Activated CD4-positive, alpha-beta memory T cell treated with anti-CD3 and anti-CD28 coated beads for 36 hours (primary cell): ENCODE measurements at regions of chr3 and their contacts with region 1.

Region 1: GRCh38 chr3:121883507-121883906 is 10.7 kb upstream of the SLC15A2 start:
- DNase-seq: no peak
- H3K4me3 Mint-ChIP-seq: no peak overlapping the region
- H3K27ac Mint-ChIP-seq: no peak overlapping the region
- H3K4me1 Mint-ChIP-seq: peaks cover 2% of the 10 kb centered on the region
- H3K27me3 Mint-ChIP-seq: no peaks in the 10 kb centered on the region

Region 2: DNA sequence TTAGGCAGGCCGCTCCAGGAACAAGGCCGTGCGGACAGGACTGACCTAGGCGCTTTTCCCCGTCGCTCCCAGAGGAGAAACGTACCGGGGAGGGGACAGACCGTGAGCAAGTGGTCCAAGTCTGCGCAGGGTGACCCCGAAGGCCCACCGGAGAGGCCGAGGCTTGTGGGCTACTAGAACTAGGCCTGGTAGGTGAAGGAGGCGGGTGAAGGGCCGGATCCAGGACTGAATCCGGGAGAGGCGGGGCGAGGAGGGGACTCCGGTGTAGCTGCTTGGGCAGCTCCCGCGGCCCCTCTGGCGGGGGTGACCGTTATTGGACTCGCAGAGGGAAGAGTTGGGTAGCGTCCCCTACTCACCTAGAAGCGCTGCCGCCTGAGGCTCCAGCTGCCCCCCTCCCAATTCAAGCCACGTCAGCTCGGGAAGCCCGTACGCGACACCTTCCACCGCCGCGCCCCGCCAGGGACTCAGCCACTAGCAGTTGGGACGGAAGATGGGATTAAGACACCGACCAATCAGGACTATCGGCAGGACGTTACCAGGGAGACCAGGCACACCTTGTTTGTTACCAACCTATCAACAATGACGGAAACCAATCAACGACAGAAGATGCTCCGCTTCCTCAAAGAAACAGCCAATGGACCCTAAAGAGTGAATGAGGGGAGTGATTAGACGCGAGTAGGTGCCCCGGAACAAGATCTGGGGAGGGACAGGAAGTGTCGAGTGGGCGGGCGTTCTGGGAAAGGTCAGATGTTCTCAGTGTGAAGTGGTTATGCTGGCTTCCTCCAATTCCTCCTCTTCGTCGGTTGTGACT is 134.0 kb before region 1 on chr3 and contains the start of gene GOLGB1:
- CTCF ChIA-PET with region 1: no interaction called
- POLR2A ChIA-PET with region 1: no interaction called
- intact Hi-C with region 1: no loop called
- DNase-seq: peak; percentile 97
- H3K4me3 Mint-ChIP-seq: no peak within 1 kb of the TSS
- H3K27ac Mint-ChIP-seq: no peak within 1 kb of the TSS
- H3K4me1 Mint-ChIP-seq: peaks cover 10% of the 10 kb centered on the region
- H3K27me3 Mint-ChIP-seq: no peaks in the 10 kb centered on the region
- total RNA-seq, gene GOLGB1: 22.7 to 26.0 TPM

Region 3: GRCh38 chr3:121817753-121818152 is 65.8 kb before region 1 on chr3:
- CTCF ChIA-PET with region 1: no interaction called
- POLR2A ChIA-PET with region 1: no interaction called
- intact Hi-C with region 1: no loop called
- DNase-seq: no peak
- H3K4me3 Mint-ChIP-seq: no peak overlapping the region
- H3K27ac Mint-ChIP-seq: no peak overlapping the region
- H3K4me1 Mint-ChIP-seq: peaks cover 51% of the 10 kb centered on the region
- H3K27me3 Mint-ChIP-seq: no peaks in the 10 kb centered on the region

Region 4: GRCh38 chr3:121995161-121996137 is 111.9 kb after region 1 on chr3:
- CTCF ChIA-PET with region 1: interaction called, 5 read pairs
- POLR2A ChIA-PET with region 1: no interaction called
- intact Hi-C with region 1: loop called (anchors 2 kb)
- DNase-seq: peak; percentile 40
- H3K4me3 Mint-ChIP-seq: no peak overlapping the region
- H3K27ac Mint-ChIP-seq: no peak overlapping the region
- H3K4me1 Mint-ChIP-seq: peaks cover 29% of the 10 kb centered on the region
- H3K27me3 Mint-ChIP-seq: no peaks in the 10 kb centered on the region